Activated naive CD4-positive, alpha-beta T cell treated with anti-CD3 and anti-CD28 coated beads for 36 hours (primary cell): ENCODE measurements at regions of chr9 and their contacts with region 1.

Region 1: GRCh38 chr9:84315278-84315877 is 25.2 kb downstream of the SLC28A3 start:
- DNase-seq: peak; percentile 79
- H3K4me3 Mint-ChIP-seq: no peak overlapping the region
- H3K27ac Mint-ChIP-seq: no peak overlapping the region
- H3K4me1 Mint-ChIP-seq: peaks cover 14% of the 10 kb centered on the region
- H3K27me3 Mint-ChIP-seq: no peaks in the 10 kb centered on the region

Region 2: DNA sequence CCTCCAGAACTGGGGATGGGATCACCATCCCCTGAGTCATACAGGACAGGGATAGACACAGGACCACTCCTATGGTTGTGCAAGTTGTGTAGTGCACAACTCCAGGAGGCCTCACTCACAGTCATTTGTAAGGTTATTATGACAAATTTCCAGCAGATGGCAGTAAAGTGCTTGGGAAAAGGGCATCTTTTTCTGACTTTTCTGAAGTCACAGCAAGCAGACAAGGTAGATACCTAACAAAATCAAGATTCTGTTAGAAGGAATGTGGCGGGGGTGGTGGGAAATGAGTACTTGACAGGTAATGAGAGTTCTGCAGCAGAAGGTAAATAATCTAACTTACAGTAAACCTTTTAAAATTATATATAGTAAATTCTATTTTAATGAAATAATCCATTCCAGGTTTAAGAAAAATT is 377.5 kb before region 1 on chr9:
- CTCF ChIA-PET with region 1: interaction called, 10 read pairs
- intact Hi-C with region 1: loop called (anchors 1 kb)
- DNase-seq: peak; percentile 35
- H3K4me3 Mint-ChIP-seq: no peak overlapping the region
- H3K27ac Mint-ChIP-seq: no peak overlapping the region
- H3K4me1 Mint-ChIP-seq: no peaks in the 10 kb centered on the region
- H3K27me3 Mint-ChIP-seq: no peaks in the 10 kb centered on the region

Region 3: GRCh38 chr9:84170521-84171141 is 144.7 kb before region 1 on chr9:
- CTCF ChIA-PET with region 1: interaction called, 4 read pairs
- intact Hi-C with region 1: loop called (anchors 2 kb)
- DNase-seq: no peak
- H3K4me3 Mint-ChIP-seq: no peak overlapping the region
- H3K27ac Mint-ChIP-seq: no peak overlapping the region
- H3K4me1 Mint-ChIP-seq: no peaks in the 10 kb centered on the region
- H3K27me3 Mint-ChIP-seq: peaks cover 1% of the 10 kb centered on the region

Region 4: DNA sequence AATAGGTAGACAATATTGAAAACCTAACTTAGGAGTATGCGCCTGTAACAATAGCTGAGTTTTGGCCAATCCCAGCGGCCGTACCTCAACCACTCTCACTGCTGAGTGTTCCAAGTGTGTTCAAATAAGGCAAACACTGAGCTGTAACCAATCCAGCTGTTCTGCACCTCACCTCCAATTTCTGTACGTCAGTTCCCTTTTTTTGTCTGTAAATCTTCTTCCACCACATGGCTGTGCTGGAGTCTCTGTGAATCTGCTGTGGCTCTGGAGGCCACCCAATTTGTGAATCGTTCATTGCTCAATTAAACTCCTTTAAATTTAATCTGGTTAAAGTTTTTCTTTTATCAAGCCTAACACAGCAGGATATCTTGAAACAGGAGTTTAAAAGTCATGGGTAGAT is 91.1 kb before region 1 on chr9:
- CTCF ChIA-PET with region 1: no interaction called
- intact Hi-C with region 1: loop called (anchors 2 kb)
- DNase-seq: no peak
- H3K4me3 Mint-ChIP-seq: no peak overlapping the region
- H3K27ac Mint-ChIP-seq: no peak overlapping the region
- H3K4me1 Mint-ChIP-seq: no peaks in the 10 kb centered on the region
- H3K27me3 Mint-ChIP-seq: peaks cover 2% of the 10 kb centered on the region

Region 5: GRCh38 chr9:84325347-84325982 is 10.1 kb after region 1 on chr9:
- CTCF ChIA-PET with region 1: interaction called, 13 read pairs
- intact Hi-C with region 1: no loop called
- DNase-seq: no peak
- H3K4me3 Mint-ChIP-seq: no peak overlapping the region
- H3K27ac Mint-ChIP-seq: no peak overlapping the region
- H3K4me1 Mint-ChIP-seq: no peaks in the 10 kb centered on the region
- H3K27me3 Mint-ChIP-seq: peaks cover 9% of the 10 kb centered on the region

Region 6: GRCh38 chr9:84379740-84380139 is 64.4 kb after region 1 on chr9:
- CTCF ChIA-PET with region 1: no interaction called
- intact Hi-C with region 1: no loop called
- DNase-seq: no peak
- H3K4me3 Mint-ChIP-seq: no peak overlapping the region
- H3K27ac Mint-ChIP-seq: no peak overlapping the region
- H3K4me1 Mint-ChIP-seq: no peaks in the 10 kb centered on the region
- H3K27me3 Mint-ChIP-seq: peaks cover 12% of the 10 kb centered on the region